ENCODE measurements at regions of chr10 and their contacts with region 1.

Region 1: DNA sequence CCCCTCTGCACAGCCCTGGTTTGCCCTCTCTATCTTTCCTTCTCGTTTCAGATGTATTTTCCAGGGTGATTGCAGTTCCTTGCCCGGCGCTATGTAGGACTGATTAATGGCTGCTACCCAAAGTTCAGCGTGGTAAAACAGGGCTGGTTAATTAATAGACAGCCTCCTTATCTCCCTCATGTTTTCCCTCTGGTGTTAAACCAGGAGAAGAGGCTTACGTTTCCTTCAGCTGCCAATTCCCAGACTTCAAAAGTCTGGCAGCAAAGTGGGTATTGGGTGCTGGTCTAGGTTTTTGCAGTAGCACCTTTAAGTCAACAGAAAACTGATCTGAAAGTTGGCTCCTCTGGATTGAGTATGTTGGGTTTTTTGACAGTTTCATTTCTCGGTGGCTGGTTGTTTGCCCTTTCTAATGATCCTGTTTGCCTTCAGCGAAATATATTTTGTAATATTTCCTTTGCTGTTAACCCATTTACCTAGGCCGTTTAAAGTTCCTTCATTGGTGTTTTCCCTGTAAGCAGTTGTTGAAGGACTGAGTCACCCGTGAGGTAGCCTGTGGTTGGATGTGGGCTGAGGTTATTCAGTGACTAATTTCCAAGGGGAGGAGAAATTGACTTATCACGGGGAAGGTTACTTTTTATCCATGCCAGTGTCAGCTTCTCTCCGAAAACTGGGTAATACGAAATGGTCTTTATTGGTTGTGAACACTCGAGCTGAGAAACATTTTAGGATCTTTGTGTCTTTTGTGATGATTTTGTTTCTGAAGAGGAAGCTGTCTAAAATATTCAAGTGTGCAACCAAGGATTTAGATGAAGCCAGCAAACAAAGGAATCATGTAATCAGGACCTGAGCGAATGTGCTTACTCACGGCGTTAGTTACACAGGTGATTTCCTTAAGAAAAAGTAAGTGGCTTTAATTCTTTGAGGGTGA is 257.2 kb downstream of the KIAA1217 start:
- DNase-seq: peak; percentile 72
- H3K4me3 Mint-ChIP-seq: peak overlapping the region; percentile 89
- H3K27ac Mint-ChIP-seq: peak overlapping the region; percentile 89
- H3K4me1 Mint-ChIP-seq: peaks cover 58% of the 10 kb centered on the region
- H3K27me3 Mint-ChIP-seq: no peaks in the 10 kb centered on the region
- CTCF ChIP-seq: no peak

Region 2: DNA sequence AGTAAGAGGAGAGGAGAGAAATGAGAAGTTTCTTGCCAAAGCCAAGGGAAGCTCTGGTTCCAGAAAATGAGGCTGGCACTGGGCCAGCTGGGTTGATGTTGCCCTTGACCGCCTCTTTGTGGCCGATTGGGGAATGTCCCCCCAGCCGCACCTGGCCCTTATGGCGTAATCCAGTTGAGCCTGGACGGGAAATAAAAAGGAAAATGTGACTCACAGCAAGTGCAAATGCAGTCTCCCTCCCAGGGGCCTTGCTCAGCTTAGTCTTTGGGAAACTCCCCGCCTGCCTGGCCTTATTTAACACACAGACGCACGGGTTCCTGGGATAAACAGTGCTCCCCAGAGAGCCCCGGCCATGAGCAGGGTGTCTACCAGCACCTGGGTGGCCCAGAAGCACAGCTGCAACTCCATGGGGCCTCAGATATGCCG is 82.5 kb before region 1 on chr10:
- CTCF ChIA-PET with region 1: interaction called, 4 read pairs
- intact Hi-C with region 1: loop called (anchors 1 kb)
- DNase-seq: peak; percentile 95
- H3K4me3 Mint-ChIP-seq: peak overlapping the region; percentile 60
- H3K27ac Mint-ChIP-seq: peak overlapping the region; percentile 96
- H3K4me1 Mint-ChIP-seq: peaks cover 28% of the 10 kb centered on the region
- H3K27me3 Mint-ChIP-seq: no peaks in the 10 kb centered on the region
- CTCF ChIP-seq: peak; percentile 52

Region 3: DNA sequence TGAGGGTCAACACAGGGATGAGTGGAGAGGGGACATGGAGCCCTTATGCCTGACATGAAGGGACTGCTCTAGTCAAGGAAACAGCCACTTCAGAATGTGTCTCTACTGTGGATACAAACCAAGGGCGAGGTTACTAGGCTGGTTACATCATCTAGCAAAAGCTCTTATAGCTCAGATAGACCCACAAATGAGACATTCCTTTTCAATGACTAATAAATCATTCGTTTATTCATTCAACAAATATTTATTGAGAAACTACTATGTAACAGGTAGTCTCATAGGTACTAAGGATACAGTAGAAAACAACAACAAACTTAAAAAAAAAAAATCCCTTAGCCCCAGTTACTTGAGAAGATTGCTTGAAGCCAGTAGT is 37.8 kb before region 1 on chr10:
- CTCF ChIA-PET with region 1: no interaction called
- intact Hi-C with region 1: loop called (anchors 5 kb)
- DNase-seq: peak; percentile 21
- H3K4me3 Mint-ChIP-seq: no peak overlapping the region
- H3K27ac Mint-ChIP-seq: no peak overlapping the region
- H3K4me1 Mint-ChIP-seq: peaks cover 29% of the 10 kb centered on the region
- H3K27me3 Mint-ChIP-seq: no peaks in the 10 kb centered on the region
- CTCF ChIP-seq: no peak

Region 4: DNA sequence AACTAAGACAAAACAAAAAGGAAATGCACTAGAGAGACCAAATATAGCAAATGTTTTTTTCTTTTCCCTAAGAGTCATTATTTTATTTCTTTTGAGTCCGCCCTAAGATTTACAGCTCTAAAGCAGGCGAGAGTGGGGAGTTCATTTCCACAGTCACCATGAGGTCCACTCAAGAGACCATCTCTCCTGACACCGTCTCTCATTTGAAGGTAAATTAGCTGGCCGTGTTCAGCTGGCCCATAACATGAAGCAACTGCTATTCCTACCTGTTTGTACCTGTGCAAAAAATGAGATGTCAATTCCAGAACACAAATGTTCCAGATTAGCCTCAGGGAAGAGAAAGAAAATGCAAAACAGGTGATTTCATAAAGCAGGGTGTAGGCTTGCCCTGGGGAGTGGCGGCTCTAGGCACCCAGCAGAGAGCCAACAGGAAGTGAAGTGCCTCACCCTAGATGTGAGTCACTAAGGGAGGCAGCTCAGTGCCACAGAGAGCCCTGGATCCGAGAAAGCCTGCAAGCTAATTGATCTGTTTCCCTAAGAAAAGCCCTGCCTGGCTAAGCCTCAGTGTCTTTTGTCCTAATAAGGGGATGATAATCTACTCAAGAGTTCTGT is 17.4 kb after region 1 on chr10:
- CTCF ChIA-PET with region 1: interaction called, 5 read pairs
- intact Hi-C with region 1: loop called (anchors 2 kb)
- DNase-seq: peak; percentile 88
- H3K4me3 Mint-ChIP-seq: peak overlapping the region; percentile 47
- H3K27ac Mint-ChIP-seq: peak overlapping the region; percentile 95
- H3K4me1 Mint-ChIP-seq: peaks cover 71% of the 10 kb centered on the region
- H3K27me3 Mint-ChIP-seq: no peaks in the 10 kb centered on the region
- CTCF ChIP-seq: no peak

Region 5: GRCh38 chr10:24503461-24504320 is 37.5 kb after region 1 on chr10:
- CTCF ChIA-PET with region 1: no interaction called
- intact Hi-C with region 1: loop called (anchors 1 kb)
- DNase-seq: peak; percentile 62
- H3K4me3 Mint-ChIP-seq: no peak overlapping the region
- H3K27ac Mint-ChIP-seq: no peak overlapping the region
- H3K4me1 Mint-ChIP-seq: no peaks in the 10 kb centered on the region
- H3K27me3 Mint-ChIP-seq: no peaks in the 10 kb centered on the region
- CTCF ChIP-seq: peak; percentile 75

Region 6: GRCh38 chr10:24518981-24519597 is 52.9 kb after region 1 on chr10:
- CTCF ChIA-PET with region 1: no interaction called
- intact Hi-C with region 1: loop called (anchors 5 kb)
- DNase-seq: peak; percentile 74
- H3K4me3 Mint-ChIP-seq: no peak overlapping the region
- H3K27ac Mint-ChIP-seq: no peak overlapping the region
- H3K4me1 Mint-ChIP-seq: no peaks in the 10 kb centered on the region
- H3K27me3 Mint-ChIP-seq: no peaks in the 10 kb centered on the region
- CTCF ChIP-seq: peak; percentile 56